MCF 10A (cell line): ENCODE measurements at regions of chr5 and their contacts with region 1.

Region 1: GRCh38 chr5:158382473-158382872 is 523.5 kb upstream of the CLINT1 start:
- DNase-seq: peak; percentile 99
- H3K4me3 Mint-ChIP-seq: no peak overlapping the region
- H3K27ac Mint-ChIP-seq: peak overlapping the region; percentile 82
- H3K4me1 Mint-ChIP-seq: peaks cover 52% of the 10 kb centered on the region
- H3K27me3 Mint-ChIP-seq: no peaks in the 10 kb centered on the region
- CTCF ChIP-seq: no peak

Region 2: DNA sequence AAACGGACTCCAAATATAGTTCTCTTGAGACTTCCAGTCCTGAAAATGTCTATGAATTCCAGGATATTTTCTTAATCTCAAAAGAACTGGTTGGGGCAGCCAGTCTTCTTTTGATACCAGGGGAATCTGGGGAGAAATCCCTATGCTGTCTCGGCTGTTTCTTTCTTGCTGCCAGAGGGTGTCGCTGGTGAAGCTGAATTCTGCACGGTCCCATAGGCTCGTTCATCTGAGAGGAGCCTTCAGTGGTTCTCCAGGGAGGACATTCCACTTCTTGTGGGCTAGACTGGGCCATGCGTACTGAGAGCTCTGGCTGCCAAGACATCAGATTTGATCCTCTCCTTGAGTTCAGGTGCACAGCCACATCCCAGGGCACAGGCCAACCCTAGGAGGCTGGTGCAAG is 368.5 kb before region 1 on chr5:
- CTCF ChIA-PET with region 1: no interaction called
- POLR2A ChIA-PET with region 1: no interaction called
- intact Hi-C with region 1: loop called (anchors 10 kb)
- DNase-seq: peak; percentile 64
- H3K4me3 Mint-ChIP-seq: no peak overlapping the region
- H3K27ac Mint-ChIP-seq: no peak overlapping the region
- H3K4me1 Mint-ChIP-seq: no peaks in the 10 kb centered on the region
- H3K27me3 Mint-ChIP-seq: no peaks in the 10 kb centered on the region
- CTCF ChIP-seq: peak; percentile 68

Region 3: GRCh38 chr5:158406884-158407823 is 24.7 kb after region 1 on chr5:
- CTCF ChIA-PET with region 1: no interaction called
- POLR2A ChIA-PET with region 1: interaction called, 12 read pairs
- intact Hi-C with region 1: loop called (anchors 1 kb)
- DNase-seq: peak; percentile 84
- H3K4me3 Mint-ChIP-seq: no peak overlapping the region
- H3K27ac Mint-ChIP-seq: peak overlapping the region; percentile 13
- H3K4me1 Mint-ChIP-seq: peaks cover 6% of the 10 kb centered on the region
- H3K27me3 Mint-ChIP-seq: no peaks in the 10 kb centered on the region
- CTCF ChIP-seq: no peak

Region 4: DNA sequence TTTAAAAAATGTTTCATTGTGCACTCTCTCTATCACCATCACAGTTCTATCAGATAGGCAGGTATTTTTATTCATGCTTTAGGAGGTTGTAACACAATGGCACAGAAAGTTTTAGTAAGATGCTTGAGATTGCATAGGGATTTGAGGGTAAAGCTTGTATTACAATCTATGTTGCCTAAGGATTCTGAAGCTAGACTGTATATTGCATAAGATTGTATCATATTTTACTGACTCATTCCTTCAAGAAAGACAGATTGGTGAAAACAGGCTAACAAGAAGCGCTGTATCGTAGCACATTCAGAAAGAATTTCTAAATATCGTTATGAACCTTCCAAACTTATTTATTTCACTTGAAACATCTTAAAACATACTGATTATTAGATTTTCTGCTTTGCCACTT is 139.5 kb after region 1 on chr5:
- CTCF ChIA-PET with region 1: no interaction called
- POLR2A ChIA-PET with region 1: no interaction called
- intact Hi-C with region 1: loop called (anchors 5 kb)
- DNase-seq: peak; percentile 73
- H3K4me3 Mint-ChIP-seq: no peak overlapping the region
- H3K27ac Mint-ChIP-seq: peak overlapping the region; percentile 6
- H3K4me1 Mint-ChIP-seq: peaks cover 9% of the 10 kb centered on the region
- H3K27me3 Mint-ChIP-seq: no peaks in the 10 kb centered on the region
- CTCF ChIP-seq: no peak

Region 5: DNA sequence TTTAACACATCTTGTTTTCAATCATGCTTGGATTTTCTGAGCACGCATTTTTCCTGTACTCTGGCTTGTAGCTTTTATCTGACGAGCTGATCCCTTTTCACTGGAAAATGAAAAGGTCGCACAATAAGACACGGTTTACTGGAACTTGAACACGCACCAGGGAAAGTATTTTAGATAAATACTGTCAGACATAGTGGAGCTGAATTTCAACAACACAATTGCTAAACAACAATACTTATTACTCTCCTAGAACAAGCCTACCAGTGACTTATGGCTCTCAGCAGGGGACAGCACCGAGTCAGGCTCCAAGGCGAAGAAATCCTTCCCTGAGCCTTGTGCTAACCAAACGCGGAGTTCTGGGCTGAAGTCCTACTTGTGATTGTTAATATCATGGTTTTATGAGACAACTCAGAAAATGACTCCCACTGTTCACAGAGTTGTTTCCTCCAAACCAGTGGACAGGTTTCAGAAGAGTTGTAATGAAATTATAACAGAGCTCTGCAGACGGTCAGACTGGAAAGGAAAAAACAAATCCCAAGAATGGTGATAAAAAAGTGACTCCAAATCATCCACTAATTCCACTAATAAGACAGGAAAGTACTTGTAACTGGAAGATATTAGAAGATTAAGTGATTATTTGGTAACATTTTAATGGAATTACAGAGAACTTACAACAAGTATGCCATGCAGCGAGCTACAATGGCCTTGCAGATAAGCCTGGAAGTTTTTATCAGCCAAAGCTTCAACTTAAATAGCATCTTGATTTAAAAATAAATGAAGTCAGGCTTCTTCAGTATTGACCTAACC is 357.7 kb after region 1 on chr5:
- CTCF ChIA-PET with region 1: no interaction called
- POLR2A ChIA-PET with region 1: no interaction called
- intact Hi-C with region 1: no loop called
- DNase-seq: no peak
- H3K4me3 Mint-ChIP-seq: no peak overlapping the region
- H3K27ac Mint-ChIP-seq: no peak overlapping the region
- H3K4me1 Mint-ChIP-seq: no peaks in the 10 kb centered on the region
- H3K27me3 Mint-ChIP-seq: peaks cover 46% of the 10 kb centered on the region
- CTCF ChIP-seq: no peak